GM12878 (cell line): ENCODE measurements at regions of chr13 and their contacts with region 1.

Region 1: GRCh38 chr13:105732806-105733529 is 802.5 kb downstream of the EFNB2 start:
- DNase-seq: no peak
- ATAC-seq: no peak
- H3K4me3 ChIP-seq: no peak overlapping the region
- H3K27ac ChIP-seq: no peak overlapping the region
- H3K4me1 ChIP-seq: no peaks in the 10 kb centered on the region
- H3K27me3 ChIP-seq: no peaks in the 10 kb centered on the region
- CTCF ChIP-seq: no peak
- EP300 ChIP-seq: no peak
- POLR2A ChIP-seq: no peak
- RAD21 ChIP-seq: no peak

Region 2: GRCh38 chr13:105719859-105720258 is 13.1 kb before region 1 on chr13:
- CTCF ChIA-PET with region 1: interaction called, 6 read pairs
- POLR2A ChIA-PET with region 1: no interaction called
- RAD21 ChIA-PET with region 1: no interaction called
- SMC1A ChIA-PET with region 1: interaction called, 10 read pairs
- in situ Hi-C with region 1: no loop called
- intact Hi-C with region 1: no loop called
- DNase-seq: no peak
- ATAC-seq: no peak
- H3K4me3 ChIP-seq: no peak overlapping the region
- H3K27ac ChIP-seq: no peak overlapping the region
- H3K4me1 ChIP-seq: no peaks in the 10 kb centered on the region
- H3K27me3 ChIP-seq: no peaks in the 10 kb centered on the region
- CTCF ChIP-seq: no peak
- EP300 ChIP-seq: no peak
- POLR2A ChIP-seq: no peak
- RAD21 ChIP-seq: no peak